Posterior vena cava (tissue), 2 donors: ENCODE measurements at regions of chr9 and their contacts with region 1.

Region 1: DNA sequence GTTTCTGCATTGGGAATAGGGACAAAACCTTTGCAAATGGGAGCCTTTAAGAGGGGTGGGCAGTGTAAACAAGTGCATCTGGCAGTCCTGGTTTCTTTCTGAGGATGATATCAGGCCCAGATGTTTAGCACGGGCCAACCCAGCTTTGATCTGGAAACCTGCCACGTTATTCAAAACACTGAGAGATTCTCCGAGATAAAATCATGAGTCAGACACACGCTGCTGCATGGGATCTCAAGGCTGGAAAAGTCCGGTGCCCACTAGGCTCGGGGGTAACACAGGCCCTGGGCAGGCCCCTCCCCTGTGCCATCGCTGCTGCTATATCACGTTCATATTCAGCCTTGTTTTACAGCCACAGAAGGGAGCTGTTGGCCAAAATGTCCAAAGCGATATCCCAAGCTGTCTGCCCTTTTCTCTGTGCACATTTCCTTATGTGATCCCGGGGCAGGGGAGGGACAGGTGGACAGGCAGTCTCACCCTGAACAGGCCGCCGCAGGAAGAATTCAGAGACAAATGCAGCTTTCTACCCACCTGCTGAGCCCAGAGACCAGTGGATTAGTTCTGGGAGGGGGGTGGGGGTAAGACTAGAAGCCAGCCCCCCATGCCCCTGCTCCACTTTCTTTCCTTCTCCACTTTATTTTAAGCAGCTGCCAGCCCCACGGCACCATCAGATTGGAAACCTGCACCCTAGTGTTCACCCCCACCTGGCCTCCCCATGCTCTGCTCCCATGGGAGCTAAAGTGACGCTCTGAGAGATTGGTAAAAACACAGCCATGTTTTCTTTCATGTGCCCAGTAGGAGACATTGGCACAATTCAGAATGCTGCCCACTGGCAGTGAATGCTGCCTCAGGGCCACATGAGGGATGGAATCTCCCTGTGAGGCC is 63.1 kb downstream of the TMOD1 start:
- DNase-seq: peak; percentile 82

Region 2: DNA sequence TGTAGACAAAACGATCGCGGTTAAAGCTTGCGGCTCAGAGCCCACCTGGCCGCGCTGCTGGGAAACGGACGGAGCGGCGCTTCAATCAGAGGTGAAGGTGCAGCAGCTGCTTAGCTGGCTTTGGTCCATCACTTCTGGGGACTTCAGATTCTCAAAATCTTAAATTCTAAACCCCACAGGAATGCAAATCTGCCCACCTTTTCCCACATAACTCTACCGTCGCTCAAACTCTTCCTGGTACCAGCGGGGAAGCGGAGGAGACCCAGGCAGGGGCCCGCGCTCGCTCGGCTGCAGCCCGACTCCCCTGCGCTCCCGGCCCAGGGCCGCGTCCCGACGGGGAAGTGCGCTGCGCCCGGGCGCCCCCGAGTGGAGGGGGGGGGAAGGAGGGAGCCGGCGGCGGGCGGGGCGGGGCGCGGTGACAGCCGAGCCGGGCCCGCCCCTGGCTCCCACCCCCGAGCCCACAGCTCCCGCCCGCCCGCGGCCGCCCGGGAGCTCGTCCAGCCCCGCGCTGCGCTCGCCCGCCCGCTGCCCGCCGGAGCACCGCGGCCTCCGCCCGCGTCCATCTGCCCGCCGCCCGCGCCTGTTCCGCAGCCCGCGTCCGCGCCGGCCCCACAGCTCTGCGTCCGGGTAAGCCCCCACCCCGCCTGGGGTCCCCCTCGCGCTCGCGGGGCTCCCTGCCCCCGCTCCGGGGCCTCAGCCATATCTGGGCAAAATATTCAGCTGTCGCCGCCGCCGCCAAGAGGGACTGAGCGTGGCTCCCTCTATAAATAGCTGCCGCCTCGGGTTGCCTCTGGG is 63.2 kb before region 1 on chr9 and contains the start of gene TMOD1:
- intact Hi-C with region 1: loop called in 1 of 2 experiments (anchors 10 kb)
- DNase-seq: peak; percentile 89
- total RNA-seq, gene TMOD1: 57.8 to 72.1 TPM